ENCODE measurements at regions of chr19 and their contacts with region 1.

Region 1: DNA sequence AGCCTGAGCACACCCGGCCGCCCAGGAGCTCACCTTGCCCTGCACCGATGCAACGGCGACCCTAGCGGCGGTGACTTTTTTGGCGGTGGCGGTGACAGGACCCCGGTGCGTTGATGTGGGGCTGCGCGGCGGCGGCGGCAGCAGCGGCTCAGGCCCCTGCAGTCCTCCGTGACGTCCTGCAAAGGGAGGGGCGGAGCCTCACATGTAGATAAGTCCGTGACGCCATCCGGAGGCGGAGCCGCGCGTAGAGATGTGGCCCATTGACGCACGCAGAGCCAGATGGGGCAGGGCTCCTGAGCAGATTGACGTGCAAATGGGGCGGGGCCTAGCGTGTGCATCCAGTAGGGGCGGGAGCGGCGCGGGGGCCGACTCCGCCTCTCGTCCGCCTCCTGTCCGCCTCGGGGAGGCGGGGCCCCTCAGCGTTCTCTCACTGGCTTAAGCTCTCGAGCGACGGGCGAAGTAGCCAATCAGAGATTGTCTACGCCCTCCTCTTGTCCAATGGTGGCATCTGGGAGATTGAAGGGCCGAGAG is at the start of gene RAB3A:
- DNase-seq: peak; percentile 100
- H3K4me3 Mint-ChIP-seq: peak within 1 kb of the TSS; percentile 90
- H3K27ac Mint-ChIP-seq: peak within 1 kb of the TSS; percentile 90
- H3K4me1 Mint-ChIP-seq: peaks cover 31% of the 10 kb centered on the region
- H3K27me3 Mint-ChIP-seq: peaks cover 5% of the 10 kb centered on the region
- total RNA-seq, gene RAB3A: 3.7 to 5.3 TPM

Region 2: DNA sequence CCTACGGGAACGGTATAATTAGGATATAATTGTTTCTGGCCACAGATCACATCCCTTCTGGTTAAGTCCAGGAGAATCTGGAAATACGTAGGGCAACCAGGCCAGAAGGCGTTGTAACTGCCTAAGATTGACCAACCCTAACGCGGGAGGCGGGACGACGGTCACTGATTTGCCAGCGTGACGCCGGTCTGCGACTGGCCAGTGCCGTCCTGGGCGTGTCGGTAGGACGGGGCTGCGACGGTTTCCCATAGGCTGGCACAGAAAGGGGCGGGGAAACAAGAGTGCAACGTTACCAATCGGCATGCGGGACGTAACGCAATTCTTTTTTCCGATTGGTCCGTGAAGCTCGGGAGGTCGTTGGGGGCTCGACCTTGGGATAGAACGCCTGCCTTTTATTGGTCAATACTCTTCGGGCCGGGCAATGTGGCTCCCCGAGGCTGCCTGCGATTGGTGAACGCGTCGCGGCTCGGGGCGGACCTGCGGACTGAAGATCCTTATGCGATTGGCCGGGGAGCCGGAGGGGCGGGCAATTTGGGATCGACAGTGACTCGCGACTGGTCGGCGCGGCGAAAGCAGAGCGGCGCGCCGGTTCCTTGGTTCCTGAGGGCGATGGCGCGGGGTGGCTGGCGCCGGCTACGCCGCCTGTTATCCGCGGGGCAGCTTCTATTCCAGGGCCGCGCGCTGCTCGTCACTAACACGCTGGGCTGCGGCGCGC is 11.1 kb before region 1 on chr19 and contains the start of gene MPV17L2:
- CTCF ChIA-PET with region 1: interaction called, 21 read pairs
- POLR2A ChIA-PET with region 1: interaction called, 32 read pairs
- DNase-seq: peak; percentile 99
- H3K4me3 Mint-ChIP-seq: peak within 1 kb of the TSS; percentile 74
- H3K27ac Mint-ChIP-seq: peak within 1 kb of the TSS; percentile 85
- H3K4me1 Mint-ChIP-seq: peaks cover 23% of the 10 kb centered on the region
- H3K27me3 Mint-ChIP-seq: no peaks in the 10 kb centered on the region
- total RNA-seq, gene MPV17L2: 6.2 to 6.3 TPM

Region 3: DNA sequence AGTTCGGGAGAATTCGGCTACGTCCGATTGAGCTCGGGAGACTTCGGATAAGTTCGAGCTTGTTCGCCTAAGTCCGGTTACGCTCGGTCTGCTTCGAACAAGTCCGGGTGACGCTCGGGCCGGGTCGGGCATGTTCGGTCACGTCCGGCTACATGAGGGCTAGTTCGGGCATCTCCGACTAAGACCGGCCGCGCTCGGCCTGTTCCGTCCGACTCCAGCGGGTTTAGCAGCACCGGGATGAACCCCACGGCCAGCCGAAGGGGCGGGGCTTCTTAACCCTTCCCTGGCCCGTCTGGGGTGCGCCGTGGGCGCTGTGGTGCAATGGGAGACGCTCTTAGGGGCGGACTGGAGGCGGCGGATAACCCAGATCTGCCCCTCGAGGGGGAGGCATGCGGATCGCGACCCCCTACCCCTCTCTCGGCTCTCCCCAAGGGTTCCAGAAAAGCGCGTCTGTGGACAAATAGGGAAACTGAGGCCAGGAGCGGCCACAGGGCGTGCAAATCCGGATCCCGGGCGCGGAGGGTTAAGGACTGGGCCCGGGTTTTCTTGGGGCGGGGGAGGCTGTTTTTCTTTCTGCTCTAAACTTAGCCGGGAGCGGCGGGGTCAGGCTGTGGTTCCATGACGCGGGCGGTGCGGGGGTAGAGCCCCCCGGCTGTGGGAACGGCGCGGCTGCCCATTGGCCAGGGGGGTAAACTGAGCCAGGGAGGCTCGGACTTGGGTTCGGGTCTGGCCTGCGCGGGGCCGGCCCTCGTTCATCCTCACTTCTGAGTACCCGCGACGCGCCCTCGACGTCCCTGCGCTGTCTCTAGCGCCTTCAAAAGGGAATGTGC is 20.8 kb after region 1 on chr19:
- CTCF ChIA-PET with region 1: interaction called, 10 read pairs
- POLR2A ChIA-PET with region 1: interaction called, 7 read pairs
- DNase-seq: peak; percentile 93
- H3K4me3 Mint-ChIP-seq: peak overlapping the region; percentile 75
- H3K27ac Mint-ChIP-seq: peak overlapping the region; percentile 47
- H3K4me1 Mint-ChIP-seq: peaks cover 18% of the 10 kb centered on the region
- H3K27me3 Mint-ChIP-seq: peaks cover 51% of the 10 kb centered on the region

Region 4: GRCh38 chr19:18251587-18252369 is 47.9 kb after region 1 on chr19:
- CTCF ChIA-PET with region 1: interaction called, 70 read pairs
- POLR2A ChIA-PET with region 1: interaction called, 16 read pairs
- DNase-seq: peak; percentile 84
- H3K4me3 Mint-ChIP-seq: no peak overlapping the region
- H3K27ac Mint-ChIP-seq: no peak overlapping the region
- H3K4me1 Mint-ChIP-seq: peaks cover 6% of the 10 kb centered on the region
- H3K27me3 Mint-ChIP-seq: peaks cover 31% of the 10 kb centered on the region